Gastrocnemius medialis (tissue), 4 donors: ENCODE measurements at regions of chr7 and their contacts with region 1.

Region 1: GRCh38 chr7:2209146-2209960 is 23.4 kb downstream of the MAD1L1 start:
- DNase-seq: peak; percentile 38 to 53
- ATAC-seq: peak; percentile 46 to 83
- H3K4me3 ChIP-seq: no peak overlapping the region
- H3K27ac ChIP-seq: no peak overlapping the region
- H3K4me1 ChIP-seq: peaks cover 0 to 7% of the 10 kb centered on the region in 2 donors
- H3K27me3 ChIP-seq: no peaks in the 10 kb centered on the region
- CTCF ChIP-seq: peak; percentile 52 to 83 (median 74)
- POLR2A ChIP-seq: no peak

Region 2: GRCh38 chr7:1579481-1580421 is 629.6 kb before region 1 on chr7:
- in situ Hi-C with region 1: loop called in 2 of 4 experiments (anchors 25 kb)
- intact Hi-C with region 1: no loop called
- DNase-seq: peak; percentile 34 to 54
- ATAC-seq: peak; percentile 79 to 93
- H3K4me3 ChIP-seq: no peak overlapping the region
- H3K27ac ChIP-seq: no peak overlapping the region
- H3K4me1 ChIP-seq: no peaks in the 10 kb centered on the region
- H3K27me3 ChIP-seq: no peaks in the 10 kb centered on the region
- CTCF ChIP-seq: peak; percentile 72 to 93 (median 85)
- POLR2A ChIP-seq: no peak

Region 3: GRCh38 chr7:1664711-1665548 is 544.4 kb before region 1 on chr7:
- in situ Hi-C with region 1: loop called in 1 of 4 experiments (anchors 25 kb)
- intact Hi-C with region 1: loop called (anchors 2 kb)
- DNase-seq: peak in 1 of 2 donors; percentile 17
- ATAC-seq: peak; percentile 39 to 51
- H3K4me3 ChIP-seq: peak overlapping the region; percentile 59 to 80 (median 63)
- H3K27ac ChIP-seq: peak overlapping the region; percentile 5 to 42 (median 28)
- H3K4me1 ChIP-seq: peaks cover 0 to 26% of the 10 kb centered on the region in 2 donors
- H3K27me3 ChIP-seq: peaks cover 35 to 61% (median 57%) of the 10 kb centered on the region in 3 donors
- CTCF ChIP-seq: peak; percentile 42 to 85 (median 73)
- POLR2A ChIP-seq: no peak

Region 4: DNA sequence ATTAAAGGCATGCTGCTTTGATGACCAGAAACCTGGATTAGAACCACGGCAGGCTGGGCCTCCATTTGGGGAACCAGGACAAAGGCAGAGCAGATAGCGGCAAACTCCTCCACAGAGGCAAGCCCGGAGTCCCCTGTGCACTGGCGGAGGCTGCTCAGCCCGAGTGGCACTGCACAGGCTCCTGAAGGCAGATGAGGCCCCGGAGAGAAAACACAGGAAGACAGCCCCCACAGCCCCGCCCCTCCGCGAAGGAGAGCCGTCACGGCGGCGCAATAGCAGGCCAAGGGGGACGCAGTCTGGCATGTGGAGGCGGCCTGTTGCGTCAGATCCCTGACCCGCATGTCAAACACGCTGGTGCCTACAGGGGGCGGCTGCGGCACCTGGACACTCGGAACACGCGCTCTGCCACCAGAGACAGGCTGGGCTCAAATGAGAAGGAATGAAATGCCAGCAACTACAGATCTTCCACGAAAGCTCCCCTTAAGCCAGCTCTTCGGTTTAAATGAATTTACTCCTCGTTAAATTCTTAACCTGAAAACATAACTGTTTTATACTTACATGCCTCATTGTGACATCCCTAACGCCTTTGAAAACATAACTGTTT is 105.1 kb before region 1 on chr7:
- in situ Hi-C with region 1: no loop called
- intact Hi-C with region 1: loop called (anchors 1 kb)
- DNase-seq: peak; percentile 67 to 82
- ATAC-seq: peak; percentile 79 to 85
- H3K4me3 ChIP-seq: peak overlapping the region; percentile 8 to 45 (median 34)
- H3K27ac ChIP-seq: peak overlapping the region in 2 of 4 donors; percentile 6 to 14
- H3K4me1 ChIP-seq: peaks cover 28% of the 10 kb centered on the region in 2 donors
- H3K27me3 ChIP-seq: no peaks in the 10 kb centered on the region
- CTCF ChIP-seq: peak; percentile 61 to 86 (median 80)
- POLR2A ChIP-seq: peak in 1 of 2 donors; percentile 23

Region 5: DNA sequence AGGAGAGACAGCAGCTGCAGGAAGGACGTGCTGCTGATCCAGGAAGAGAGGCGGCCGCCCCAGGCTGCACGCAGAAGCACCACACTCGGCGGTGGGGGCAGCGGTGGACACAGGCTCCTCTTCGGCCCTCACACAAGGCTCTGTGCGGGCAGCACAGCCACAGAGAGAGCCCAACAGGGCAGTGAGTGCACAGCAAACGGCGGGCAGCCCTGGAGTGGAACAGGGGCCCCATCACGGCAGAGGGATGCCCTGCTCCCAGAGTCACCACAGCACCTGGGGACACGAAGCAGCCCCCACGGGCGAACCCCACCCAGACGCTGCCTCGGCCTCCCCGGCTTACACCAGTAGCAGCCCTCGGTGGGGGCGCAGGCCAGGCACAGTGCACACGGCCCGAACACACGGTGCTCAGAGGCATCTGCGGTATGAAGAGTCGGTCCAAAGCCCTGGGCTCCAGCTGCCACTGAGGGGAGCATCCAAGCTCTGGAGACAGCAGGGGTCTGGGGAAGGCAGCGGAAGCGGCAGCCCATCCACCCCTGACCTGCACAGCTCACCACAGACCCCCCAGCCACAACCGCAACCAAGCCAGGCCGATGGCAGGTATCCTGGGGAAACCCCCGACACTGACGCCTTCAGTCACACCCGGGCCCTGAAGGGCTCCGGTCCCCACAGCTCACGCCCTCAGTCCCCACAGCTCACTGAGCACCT is 49.5 kb after region 1 on chr7:
- in situ Hi-C with region 1: no loop called
- intact Hi-C with region 1: no loop called
- DNase-seq: no peak
- ATAC-seq: no peak
- H3K4me3 ChIP-seq: no peak overlapping the region
- H3K27ac ChIP-seq: no peak overlapping the region
- H3K4me1 ChIP-seq: no peaks in the 10 kb centered on the region
- H3K27me3 ChIP-seq: no peaks in the 10 kb centered on the region
- CTCF ChIP-seq: no peak
- POLR2A ChIP-seq: no peak

Region 6: GRCh38 chr7:2288503-2288902 is 79.2 kb after region 1 on chr7:
- in situ Hi-C with region 1: no loop called
- intact Hi-C with region 1: no loop called
- DNase-seq: no peak
- ATAC-seq: no peak
- H3K4me3 ChIP-seq: no peak overlapping the region
- H3K27ac ChIP-seq: no peak overlapping the region
- H3K4me1 ChIP-seq: no peaks in the 10 kb centered on the region
- H3K27me3 ChIP-seq: no peaks in the 10 kb centered on the region
- CTCF ChIP-seq: no peak
- POLR2A ChIP-seq: no peak

Region 7: GRCh38 chr7:3312583-3312982 is 1103.2 kb after region 1 on chr7:
- in situ Hi-C with region 1: no loop called
- intact Hi-C with region 1: no loop called
- DNase-seq: no peak
- ATAC-seq: no peak
- H3K4me3 ChIP-seq: no peak overlapping the region
- H3K27ac ChIP-seq: no peak overlapping the region
- H3K4me1 ChIP-seq: no peaks in the 10 kb centered on the region
- H3K27me3 ChIP-seq: no peaks in the 10 kb centered on the region
- CTCF ChIP-seq: no peak
- POLR2A ChIP-seq: no peak